Activated CD4-positive, alpha-beta T cell treated with anti-CD3 and anti-CD28 coated beads for 36 hours (primary cell): ENCODE measurements at regions of chr15 and their contacts with region 1.

Region 1: DNA sequence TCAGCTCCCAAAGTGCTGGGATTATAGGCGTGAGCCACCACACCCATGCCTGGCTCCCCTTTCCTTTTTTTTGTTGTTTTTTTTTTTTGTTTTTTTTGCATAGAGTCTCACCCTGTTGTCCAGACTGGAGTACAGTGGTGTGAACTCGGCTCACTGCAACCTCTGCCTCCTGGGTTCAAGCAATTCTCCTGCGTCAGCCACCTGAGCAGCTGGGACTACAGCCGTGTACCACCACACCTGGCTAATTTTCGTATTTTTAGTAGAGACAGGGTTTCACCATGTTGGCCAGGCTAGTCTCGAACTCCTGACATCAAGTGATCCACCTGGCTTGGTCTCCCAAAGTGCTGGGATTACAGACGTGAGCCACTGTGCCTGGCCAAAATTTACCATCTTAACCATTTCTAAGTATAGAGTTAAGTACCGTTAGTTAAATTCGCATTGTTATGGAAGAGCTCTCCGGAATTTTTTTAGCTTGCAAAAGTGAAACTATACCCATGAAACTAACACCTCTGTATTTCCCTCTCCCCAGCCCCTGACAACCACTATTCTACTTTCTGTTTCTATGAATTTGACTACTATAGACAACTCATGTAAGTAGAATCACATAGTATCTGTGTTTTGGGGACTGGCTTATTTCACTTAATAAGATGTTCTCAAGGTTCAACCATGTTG is 70.9 kb upstream of the C15orf39 start:
- DNase-seq: no peak
- ATAC-seq: peak; percentile 99
- H3K4me3 Mint-ChIP-seq: peak overlapping the region; percentile 23
- H3K27ac Mint-ChIP-seq: no peak overlapping the region
- H3K4me1 Mint-ChIP-seq: peaks cover 15% of the 10 kb centered on the region
- H3K27me3 Mint-ChIP-seq: peaks cover 15% of the 10 kb centered on the region

Region 2: GRCh38 chr15:75090388-75090734 is 40.4 kb before region 1 on chr15:
- CTCF ChIA-PET with region 1: no interaction called
- POLR2A ChIA-PET with region 1: interaction called, 3 read pairs
- intact Hi-C with region 1: loop called (anchors 1 kb)
- DNase-seq: no peak
- ATAC-seq: no peak
- H3K4me3 Mint-ChIP-seq: no peak overlapping the region
- H3K27ac Mint-ChIP-seq: no peak overlapping the region
- H3K4me1 Mint-ChIP-seq: peaks cover 18% of the 10 kb centered on the region
- H3K27me3 Mint-ChIP-seq: peaks cover 11% of the 10 kb centered on the region

Region 3: GRCh38 chr15:75107908-75108838 is 22.6 kb before region 1 on chr15:
- CTCF ChIA-PET with region 1: no interaction called
- POLR2A ChIA-PET with region 1: no interaction called
- intact Hi-C with region 1: loop called in 1 of 2 experiments (anchors 2 kb)
- DNase-seq: peak; percentile 81
- ATAC-seq: peak; percentile 81
- H3K4me3 Mint-ChIP-seq: no peak overlapping the region
- H3K27ac Mint-ChIP-seq: no peak overlapping the region
- H3K4me1 Mint-ChIP-seq: peaks cover 28% of the 10 kb centered on the region
- H3K27me3 Mint-ChIP-seq: peaks cover 27% of the 10 kb centered on the region

Region 4: DNA sequence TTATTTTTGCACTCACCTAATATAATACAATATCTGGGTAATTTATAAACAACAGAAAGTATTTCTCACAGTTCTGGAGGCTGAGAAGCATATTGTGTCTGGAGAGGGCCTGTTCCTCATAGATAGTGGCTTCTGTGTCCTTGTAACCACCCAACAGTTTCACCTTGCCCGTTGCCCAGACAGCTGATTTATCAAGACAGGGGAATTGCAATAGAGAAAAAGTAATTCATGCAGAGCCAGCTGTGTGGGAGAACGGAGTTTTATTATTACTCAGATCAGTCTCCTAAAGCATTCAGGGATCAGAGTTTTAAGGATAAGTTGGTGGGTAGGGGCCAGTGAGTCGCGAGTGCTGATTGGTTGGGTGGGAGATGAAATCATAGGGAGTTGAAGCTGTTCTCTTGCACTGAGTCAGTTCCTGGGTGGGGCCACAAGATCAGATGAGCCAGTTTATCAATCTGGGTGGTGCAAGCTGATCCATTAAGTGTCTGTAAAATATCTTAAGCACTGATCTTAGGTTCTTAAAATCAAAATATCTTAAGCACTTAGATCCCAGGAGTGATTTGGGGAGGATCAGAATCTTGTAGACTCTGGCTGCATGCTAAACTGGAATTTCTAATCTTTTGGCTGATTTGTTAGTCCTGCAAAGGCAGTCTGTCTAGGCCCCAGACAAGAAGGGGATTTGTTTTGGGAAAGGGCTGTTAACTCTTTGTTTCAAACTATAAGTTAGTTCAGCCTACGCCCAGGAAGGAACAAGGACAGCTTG is 37.0 kb after region 1 on chr15:
- CTCF ChIA-PET with region 1: interaction called, 3 read pairs
- POLR2A ChIA-PET with region 1: no interaction called
- intact Hi-C with region 1: loop called in 1 of 2 experiments (anchors 5 kb)
- DNase-seq: peak; percentile 68
- ATAC-seq: peak; percentile 73
- H3K4me3 Mint-ChIP-seq: no peak overlapping the region
- H3K27ac Mint-ChIP-seq: no peak overlapping the region
- H3K4me1 Mint-ChIP-seq: peaks cover 21% of the 10 kb centered on the region
- H3K27me3 Mint-ChIP-seq: no peaks in the 10 kb centered on the region

Region 5: GRCh38 chr15:75517233-75517632 is 386.5 kb after region 1 on chr15:
- CTCF ChIA-PET with region 1: no interaction called
- POLR2A ChIA-PET with region 1: interaction called, 10 read pairs
- intact Hi-C with region 1: no loop called
- DNase-seq: no peak
- ATAC-seq: no peak
- H3K4me3 Mint-ChIP-seq: no peak overlapping the region
- H3K27ac Mint-ChIP-seq: no peak overlapping the region
- H3K4me1 Mint-ChIP-seq: no peaks in the 10 kb centered on the region
- H3K27me3 Mint-ChIP-seq: no peaks in the 10 kb centered on the region